Activated CD4-positive, alpha-beta T cell treated with anti-CD3 and anti-CD28 coated beads, Interleukin-2, amount 10 ng/mL, durations not matched to agents 24 days and 14 days (primary cell): ENCODE measurements at regions of chr19 and their contacts with region 1.

Region 1: GRCh38 chr19:21020298-21021227 is at the start of gene ZNF430:
- DNase-seq: peak; percentile 98
- H3K4me3 Mint-ChIP-seq: peak within 1 kb of the TSS; percentile 99
- H3K27ac Mint-ChIP-seq: peak within 1 kb of the TSS; percentile 99
- H3K4me1 Mint-ChIP-seq: peaks cover 27% of the 10 kb centered on the region
- H3K27me3 Mint-ChIP-seq: no peaks in the 10 kb centered on the region
- total RNA-seq, gene ZNF430: 21.6 and 25.1 TPM in 2 replicates

Region 2: GRCh38 chr19:20565321-20566018 is 455.1 kb before region 1 on chr19 and contains the start of gene ZNF737:
- intact Hi-C with region 1: loop called (anchors 5 kb)
- DNase-seq: peak; percentile 96
- H3K4me3 Mint-ChIP-seq: peak within 1 kb of the TSS; percentile 99
- H3K27ac Mint-ChIP-seq: peak within 1 kb of the TSS; percentile 98
- H3K4me1 Mint-ChIP-seq: peaks cover 7% of the 10 kb centered on the region
- H3K27me3 Mint-ChIP-seq: no peaks in the 10 kb centered on the region
- total RNA-seq, gene ZNF737: 7.2 and 8.5 TPM in 2 replicates

Region 3: DNA sequence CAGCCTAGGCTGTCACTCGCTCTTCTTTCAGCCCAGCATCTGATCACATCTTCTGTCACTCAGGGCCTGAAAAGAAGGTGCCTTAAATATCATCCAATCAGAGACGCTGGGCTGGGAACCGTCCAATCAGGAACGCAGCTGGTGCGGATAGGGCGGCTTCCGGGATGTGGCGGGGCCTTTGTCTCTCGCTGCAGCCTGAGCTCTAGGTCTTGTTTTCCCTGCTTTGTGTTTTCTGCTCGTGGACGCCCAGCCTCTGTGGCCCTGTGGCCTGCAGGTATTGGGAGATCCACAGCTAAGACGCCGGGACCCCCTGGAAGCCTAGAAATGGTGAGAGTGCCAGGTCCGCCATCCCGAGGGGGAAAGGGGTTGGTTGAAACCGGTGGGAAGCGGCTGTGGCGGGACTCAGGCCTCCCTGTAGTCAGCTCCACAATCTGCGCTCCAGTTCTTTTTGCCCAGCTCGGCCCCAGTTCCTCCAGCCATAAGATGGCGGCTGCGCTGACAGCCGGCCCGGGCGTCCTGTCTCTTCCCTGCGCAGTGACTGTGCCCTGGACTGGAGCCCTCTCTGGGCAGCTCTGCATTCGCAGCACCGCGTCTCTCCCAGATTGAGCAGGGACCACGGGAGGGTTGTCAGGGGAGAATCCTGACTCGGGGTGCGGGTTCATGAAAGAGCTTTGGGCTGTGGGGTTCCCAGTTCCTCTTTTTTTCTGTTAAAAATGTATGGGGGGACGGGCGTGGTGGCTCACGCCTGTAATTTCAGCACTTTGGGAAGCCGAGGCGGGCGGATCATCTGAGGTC is 97.3 kb before region 1 on chr19 and contains the start of gene ZNF85:
- intact Hi-C with region 1: loop called (anchors 1 kb)
- DNase-seq: peak; percentile 96
- H3K4me3 Mint-ChIP-seq: peak within 1 kb of the TSS; percentile 98
- H3K27ac Mint-ChIP-seq: peak within 1 kb of the TSS; percentile 98
- H3K4me1 Mint-ChIP-seq: peaks cover 9% of the 10 kb centered on the region
- H3K27me3 Mint-ChIP-seq: no peaks in the 10 kb centered on the region
- total RNA-seq, gene ZNF85: 9.9 and 11.9 TPM in 2 replicates

Region 4: GRCh38 chr19:21082011-21082975 is 61.7 kb after region 1 on chr19 and contains the start of gene ZNF714:
- intact Hi-C with region 1: loop called (anchors 2 kb)
- DNase-seq: peak; percentile 96
- H3K4me3 Mint-ChIP-seq: peak within 1 kb of the TSS; percentile 96
- H3K27ac Mint-ChIP-seq: peak within 1 kb of the TSS; percentile 99
- H3K4me1 Mint-ChIP-seq: peaks cover 26% of the 10 kb centered on the region
- H3K27me3 Mint-ChIP-seq: no peaks in the 10 kb centered on the region
- total RNA-seq, gene ZNF714: 18.8 and 20.4 TPM in 2 replicates

Region 5: DNA sequence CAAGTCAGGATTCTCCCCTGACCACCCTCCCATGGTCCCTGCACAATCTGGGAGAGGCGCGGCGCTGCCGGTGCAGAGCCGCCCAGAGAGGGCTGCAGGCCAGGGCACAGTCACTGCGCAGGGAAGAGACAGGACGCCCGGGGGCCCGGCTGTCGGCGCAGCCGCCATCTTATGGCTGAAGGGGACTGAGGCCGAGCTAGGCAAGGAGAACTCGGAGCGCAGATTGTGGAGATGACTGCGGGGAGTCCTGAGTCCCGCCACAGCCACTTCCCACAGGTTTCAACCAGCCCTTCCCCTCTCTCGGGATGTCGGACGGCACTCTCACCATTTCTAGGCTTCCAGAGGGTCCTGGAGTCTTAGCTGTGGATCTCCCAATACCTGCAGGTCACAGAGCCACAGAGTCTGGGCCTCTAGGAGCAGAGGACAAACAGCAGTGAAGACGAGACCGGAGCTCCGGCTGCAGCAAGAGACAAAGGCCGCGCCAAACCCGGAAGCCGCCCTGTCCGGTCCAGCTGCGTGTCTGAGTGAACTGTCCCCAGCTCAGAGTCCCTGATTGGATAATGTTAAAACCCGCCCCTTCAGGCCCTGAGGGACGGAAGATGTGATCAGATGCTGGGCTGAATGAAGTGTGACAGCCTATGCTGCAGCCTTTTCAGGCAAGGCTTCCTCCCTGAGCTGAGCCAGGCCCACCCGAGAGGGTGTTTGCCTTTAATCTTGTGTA is 308.5 kb after region 1 on chr19 and contains the start of gene ZNF708:
- intact Hi-C with region 1: loop called (anchors 5 kb)
- DNase-seq: peak; percentile 94
- H3K4me3 Mint-ChIP-seq: peak within 1 kb of the TSS; percentile 94
- H3K27ac Mint-ChIP-seq: peak within 1 kb of the TSS; percentile 100
- H3K4me1 Mint-ChIP-seq: peaks cover 17% of the 10 kb centered on the region
- H3K27me3 Mint-ChIP-seq: no peaks in the 10 kb centered on the region
- total RNA-seq, gene ZNF708: 10.1 TPM in 2 replicates